Activated T-helper 1 cell treated with anti-CD3 and anti-CD28 coated beads, Interleukin-12 subunit alpha, Interleukin-12 subunit beta, Interleukin-2, Interleukin-4 antibody, amounts not matched to agents 30 ng/mL and 10 ng/mL and 1 ng/mL, durations not matched to agents 14 hours and 24 hours and 36 hours (primary cell): ENCODE measurements at regions of chrX and their contacts with region 1.

Region 1: DNA sequence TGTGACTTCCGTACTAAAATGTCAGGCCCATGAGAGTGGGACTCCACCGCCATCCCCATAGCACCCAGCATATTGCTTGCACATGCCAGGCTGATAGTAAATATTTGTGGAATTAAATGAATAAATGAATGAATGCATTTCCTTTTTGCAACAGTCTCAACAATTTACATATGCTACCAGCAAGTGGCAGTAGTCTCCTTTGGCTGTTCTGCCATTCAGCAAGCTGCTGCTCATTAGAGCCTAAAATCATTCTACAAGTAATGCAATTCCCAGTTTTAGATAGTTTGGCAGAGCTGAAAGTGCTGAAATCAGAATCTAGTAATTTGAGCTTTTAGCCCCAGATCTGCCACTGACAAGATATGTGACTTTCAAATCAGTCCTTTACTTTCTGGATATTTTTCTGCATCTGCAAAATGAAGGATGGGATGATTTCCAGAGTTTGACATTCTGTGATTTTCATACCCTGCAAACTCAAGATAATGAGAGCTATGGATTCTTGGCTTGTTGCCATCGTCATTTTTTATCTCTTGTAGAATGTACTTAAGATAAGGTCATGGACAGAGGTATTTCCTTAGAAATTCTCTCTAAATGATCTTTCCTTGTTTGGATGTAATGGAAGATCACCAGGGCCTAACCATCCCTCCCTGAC is 35.7 kb upstream of the INTS6L start:
- DNase-seq: no peak
- H3K4me3 Mint-ChIP-seq: no peak overlapping the region
- H3K27ac Mint-ChIP-seq: no peak overlapping the region
- H3K4me1 Mint-ChIP-seq: no peaks in the 10 kb centered on the region
- H3K27me3 Mint-ChIP-seq: no peaks in the 10 kb centered on the region

Region 2: DNA sequence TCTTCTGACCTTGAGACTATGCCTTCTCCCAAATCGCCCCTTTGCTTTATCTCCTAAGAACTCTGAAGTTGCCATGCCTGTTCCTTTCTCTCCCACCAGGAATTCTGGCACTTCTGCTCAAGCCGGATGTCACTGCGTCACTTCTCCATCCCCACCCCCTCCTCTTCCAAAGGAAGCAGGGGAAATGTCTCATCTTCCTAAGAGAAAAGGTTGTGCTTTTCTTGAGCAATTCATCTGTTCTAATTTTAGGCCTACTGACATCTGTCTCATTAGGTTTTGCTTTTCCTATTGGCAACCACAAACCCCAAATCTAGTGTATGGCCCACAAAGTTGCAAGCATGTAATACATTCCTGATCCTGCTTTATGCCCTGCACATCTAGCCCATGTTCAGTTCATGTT is 663.4 kb before region 1 on chrX:
- intact Hi-C with region 1: no loop called
- DNase-seq: no peak
- H3K4me3 Mint-ChIP-seq: no peak overlapping the region
- H3K27ac Mint-ChIP-seq: no peak overlapping the region
- H3K4me1 Mint-ChIP-seq: peaks cover 4% of the 10 kb centered on the region
- H3K27me3 Mint-ChIP-seq: no peaks in the 10 kb centered on the region

Region 3: DNA sequence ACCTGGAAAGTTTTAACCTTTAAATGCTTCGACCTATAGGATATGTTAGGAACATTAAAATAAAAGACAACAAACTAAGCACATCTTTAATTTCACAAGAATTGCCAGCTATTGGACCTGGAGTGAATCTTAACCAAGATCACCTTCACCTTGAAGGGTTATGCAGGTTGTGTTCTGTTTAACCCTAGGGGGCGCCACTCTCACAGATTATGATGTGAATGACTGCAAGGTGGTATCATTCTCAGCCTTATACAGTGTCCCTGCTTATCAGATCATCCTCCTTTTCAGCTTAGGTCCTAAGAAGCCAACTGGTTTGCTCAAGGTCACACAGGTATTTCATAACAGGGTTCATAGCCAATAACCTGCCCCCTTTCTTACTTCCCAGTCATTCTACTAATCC is 59.2 kb after region 1 on chrX:
- intact Hi-C with region 1: loop called (anchors 2 kb)
- DNase-seq: no peak
- H3K4me3 Mint-ChIP-seq: no peak overlapping the region
- H3K27ac Mint-ChIP-seq: no peak overlapping the region
- H3K4me1 Mint-ChIP-seq: peaks cover 29% of the 10 kb centered on the region
- H3K27me3 Mint-ChIP-seq: no peaks in the 10 kb centered on the region

Region 4: GRCh38 chrX:135572436-135572835 is 87.7 kb after region 1 on chrX:
- intact Hi-C with region 1: loop called (anchors 1 kb)
- DNase-seq: no peak
- H3K4me3 Mint-ChIP-seq: no peak overlapping the region
- H3K27ac Mint-ChIP-seq: no peak overlapping the region
- H3K4me1 Mint-ChIP-seq: no peaks in the 10 kb centered on the region
- H3K27me3 Mint-ChIP-seq: no peaks in the 10 kb centered on the region

Region 5: GRCh38 chrX:135596495-135596894 is 111.7 kb after region 1 on chrX:
- intact Hi-C with region 1: loop called (anchors 1 kb)
- DNase-seq: peak; percentile 14
- H3K4me3 Mint-ChIP-seq: no peak overlapping the region
- H3K27ac Mint-ChIP-seq: no peak overlapping the region
- H3K4me1 Mint-ChIP-seq: no peaks in the 10 kb centered on the region
- H3K27me3 Mint-ChIP-seq: peaks cover 24% of the 10 kb centered on the region

Region 6: GRCh38 chrX:135697601-135698000 is 212.8 kb after region 1 on chrX:
- intact Hi-C with region 1: loop called (anchors 10 kb)
- DNase-seq: no peak
- H3K4me3 Mint-ChIP-seq: no peak overlapping the region
- H3K27ac Mint-ChIP-seq: no peak overlapping the region
- H3K4me1 Mint-ChIP-seq: no peaks in the 10 kb centered on the region
- H3K27me3 Mint-ChIP-seq: no peaks in the 10 kb centered on the region